Posterior vena cava (tissue), 2 donors: ENCODE measurements at regions of chr9 and their contacts with region 1.

Region 1: DNA sequence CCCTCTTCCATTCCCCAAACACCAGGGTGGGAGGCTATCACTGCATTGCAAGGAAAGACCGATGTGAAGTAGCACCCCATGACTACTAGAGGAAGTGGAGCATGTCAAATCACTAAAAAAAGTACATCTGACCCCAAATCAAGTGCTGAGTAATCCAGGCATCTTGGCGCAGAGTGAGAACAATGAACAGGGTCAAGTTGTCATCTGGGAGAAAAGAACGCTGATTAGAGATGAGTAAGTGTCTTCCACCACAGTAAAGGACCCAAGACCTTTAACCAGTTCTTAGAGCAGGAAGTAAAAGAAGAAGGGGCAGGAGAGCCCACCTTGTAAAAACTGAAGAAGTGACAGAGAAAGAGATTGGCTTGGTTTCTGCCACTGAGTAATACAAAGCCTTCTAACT is 75.0 kb upstream of the RAD23B start:
- DNase-seq: no peak

Region 2: GRCh38 chr9:108400297-108401064 is 1192.4 kb after region 1 on chr9:
- intact Hi-C with region 1: loop called in 1 of 2 experiments (anchors 10 kb)
- DNase-seq: no peak